Sigmoid colon (tissue), 7 donors: ENCODE measurements at regions of chr17 and their contacts with region 1.

Region 1: GRCh38 chr17:8057691-8058114 is 18.8 kb downstream of the ALOX15B start:
- DNase-seq: peak; percentile 72
- H3K4me3 ChIP-seq: no peak overlapping the region
- H3K27ac ChIP-seq: no peak overlapping the region
- H3K4me1 ChIP-seq: peaks cover 0 to 9% (median 6%) of the 10 kb centered on the region in 4 donors
- H3K27me3 ChIP-seq: peaks cover 11 to 70% (median 49%) of the 10 kb centered on the region in 3 donors
- CTCF ChIP-seq: peak; percentile 50 to 72 (median 66)
- EP300 ChIP-seq: no peak
- POLR2A ChIP-seq: no peak

Region 2: DNA sequence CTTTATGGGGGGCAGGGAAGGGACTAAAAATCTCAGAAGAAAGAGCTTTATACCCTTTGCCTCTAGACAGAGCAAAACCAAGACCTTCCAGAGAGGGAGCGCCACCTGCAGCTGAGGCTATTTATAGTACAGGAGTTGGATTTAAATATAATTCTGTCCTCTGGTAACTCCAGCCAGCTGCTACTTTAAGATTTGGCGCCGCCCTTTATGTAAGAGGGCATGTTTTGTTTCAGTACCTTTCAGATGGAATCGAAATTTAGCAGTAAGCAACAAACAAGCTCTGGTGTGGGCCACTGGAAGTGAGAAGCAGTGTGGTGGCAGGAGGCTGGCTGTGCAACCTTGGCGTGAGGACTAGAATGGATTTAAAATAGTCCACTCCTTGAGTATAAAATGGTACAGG is 60.5 kb before region 1 on chr17:
- intact Hi-C with region 1: loop called (anchors 5 kb)
- DNase-seq: peak; percentile 64
- H3K4me3 ChIP-seq: no peak overlapping the region
- H3K27ac ChIP-seq: peak overlapping the region in 1 of 4 donors; percentile 30
- H3K4me1 ChIP-seq: peaks cover 0 to 10% (median 4%) of the 10 kb centered on the region in 4 donors
- H3K27me3 ChIP-seq: peaks cover 0 to 27% (median 12%) of the 10 kb centered on the region in 3 donors
- CTCF ChIP-seq: peak in 3 of 4 experiments; percentile 24 to 46 (median 25)
- EP300 ChIP-seq: no peak
- POLR2A ChIP-seq: no peak

Region 3: DNA sequence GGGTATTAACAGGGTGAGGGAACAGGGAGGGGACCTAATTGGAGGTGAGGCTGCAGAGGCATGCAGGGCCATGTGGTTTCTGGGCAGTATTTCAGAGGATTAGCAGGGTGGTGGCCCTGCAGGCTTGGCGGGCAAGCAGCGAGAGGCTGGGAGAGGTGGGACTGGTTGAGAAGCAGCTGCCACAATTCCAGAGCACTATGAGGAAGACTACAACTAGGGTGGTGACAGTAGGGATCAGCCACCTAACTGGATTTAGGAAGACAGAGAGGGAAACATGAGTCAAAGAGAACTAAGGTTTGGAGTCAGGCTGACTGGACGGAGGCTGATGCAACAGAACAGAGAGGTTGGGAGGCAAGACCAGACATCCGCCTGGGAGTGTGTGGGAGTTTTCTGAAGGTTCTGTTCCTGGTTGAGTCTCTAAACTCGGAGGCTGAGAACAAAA is 48.3 kb after region 1 on chr17:
- intact Hi-C with region 1: no loop called
- DNase-seq: no peak
- H3K4me3 ChIP-seq: no peak overlapping the region
- H3K27ac ChIP-seq: no peak overlapping the region
- H3K4me1 ChIP-seq: peaks cover 0 to 10% (median 8%) of the 10 kb centered on the region in 4 donors
- H3K27me3 ChIP-seq: peaks cover 14 to 31% (median 30%) of the 10 kb centered on the region in 3 donors
- CTCF ChIP-seq: no peak
- EP300 ChIP-seq: no peak
- POLR2A ChIP-seq: no peak

Region 4: DNA sequence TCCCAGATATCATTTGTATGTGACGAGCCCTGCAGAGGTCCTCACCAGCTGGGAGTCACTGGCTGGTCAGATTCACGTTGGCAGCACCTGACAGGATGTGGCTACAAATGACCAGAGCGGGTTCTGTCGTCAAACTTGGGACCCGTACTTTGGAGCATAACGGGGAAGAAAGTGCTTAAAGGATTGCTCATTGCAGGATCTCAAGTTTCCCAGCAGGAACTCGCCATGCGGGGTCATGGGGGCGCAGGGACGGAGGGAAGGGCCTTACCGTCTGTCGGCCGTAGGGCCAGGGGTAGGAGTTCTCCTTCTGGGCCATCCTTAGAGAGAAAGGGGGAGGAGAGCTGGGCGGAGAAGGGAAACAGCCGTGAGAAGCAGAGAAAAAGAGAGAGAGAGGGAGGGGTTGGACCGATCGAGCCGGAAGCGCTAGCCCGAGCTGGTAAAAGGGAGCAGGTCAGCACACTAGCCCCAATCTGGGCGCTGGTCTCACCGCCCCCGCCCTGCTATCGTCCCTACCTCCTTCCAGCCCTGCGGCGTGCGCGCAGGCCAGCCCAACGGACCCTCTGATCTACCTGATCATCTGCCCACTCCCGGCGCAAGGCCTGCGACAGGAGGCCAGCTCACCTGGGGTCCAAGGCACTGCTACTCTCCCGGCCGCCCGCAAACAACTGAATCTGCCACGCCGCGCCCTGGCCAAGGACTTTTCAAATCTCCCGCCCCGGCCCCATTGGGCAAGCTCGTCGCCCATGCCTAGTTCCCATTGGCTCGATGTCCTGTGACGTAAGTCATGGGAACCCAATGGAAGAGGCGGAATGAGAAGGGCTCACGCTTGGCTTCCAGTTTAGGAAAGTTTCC is 152.4 kb after region 1 on chr17 and contains the start of gene AURKB:
- intact Hi-C with region 1: no loop called
- DNase-seq: peak; percentile 98
- H3K4me3 ChIP-seq: peak within 1 kb of the TSS; percentile 49 to 54 (median 50)
- H3K27ac ChIP-seq: peak within 1 kb of the TSS; percentile 77 to 85 (median 81)
- H3K4me1 ChIP-seq: peaks cover 0 to 11% (median 7%) of the 10 kb centered on the region in 4 donors
- H3K27me3 ChIP-seq: no peaks in the 10 kb centered on the region
- CTCF ChIP-seq: no peak
- EP300 ChIP-seq: no peak
- POLR2A ChIP-seq: no peak
- total RNA-seq, gene AURKB: 1.4 to 3.3 TPM in 2 of 4 donors, not detected in the others